K562 (cell line): ENCODE measurements at regions of chr9 and their contacts with region 1.

Region 1: GRCh38 chr9:116365056-116365471 is 211.5 kb downstream of the PAPPA start:
- DNase-seq: no peak
- ATAC-seq: no peak
- H3K4me3 ChIP-seq: no peak overlapping the region
- H3K27ac ChIP-seq: no peak overlapping the region
- H3K4me1 ChIP-seq: peaks cover 0 to 16% of the 10 kb centered on the region in 2 experiments; a peak in 3 of 5 replicates
- H3K27me3 ChIP-seq: no peaks in the 10 kb centered on the region
- CTCF ChIP-seq: no peak
- EP300 ChIP-seq: no peak
- POLR2A ChIP-seq: no peak
- RAD21 ChIP-seq: no peak

Region 2: GRCh38 chr9:116163293-116164055 is 201.6 kb before region 1 on chr9:
- CTCF ChIA-PET with region 1: no interaction called
- POLR2A ChIA-PET with region 1: no interaction called
- in situ Hi-C with region 1: no loop called
- intact Hi-C with region 1: loop called (anchors 10 kb)
- DNase-seq: peak; percentile 19 to 21 (median 20)
- ATAC-seq: peak; percentile 62; the same call in 1 of the 3 replicates
- H3K4me3 ChIP-seq: no peak overlapping the region
- H3K27ac ChIP-seq: no peak overlapping the region
- H3K4me1 ChIP-seq: no peaks in the 10 kb centered on the region
- H3K27me3 ChIP-seq: peaks cover 0 to 13% of the 10 kb centered on the region in 2 experiments; a peak in 1 of 5 replicates
- CTCF ChIP-seq: peak; percentile 34 to 49 (median 42); a peak in 4 of 6 replicates
- EP300 ChIP-seq: no peak
- POLR2A ChIP-seq: no peak
- RAD21 ChIP-seq: peak; percentile 41 to 61; a peak in 3 of 4 replicates

Region 3: GRCh38 chr9:116697362-116697761 is 332.3 kb after region 1 on chr9:
- CTCF ChIA-PET with region 1: no interaction called
- POLR2A ChIA-PET with region 1: no interaction called
- in situ Hi-C with region 1: no loop called
- intact Hi-C with region 1: no loop called
- DNase-seq: no peak
- ATAC-seq: no peak
- H3K4me3 ChIP-seq: no peak overlapping the region
- H3K27ac ChIP-seq: no peak overlapping the region
- H3K4me1 ChIP-seq: no peaks in the 10 kb centered on the region
- H3K27me3 ChIP-seq: no peaks in the 10 kb centered on the region
- CTCF ChIP-seq: no peak
- EP300 ChIP-seq: no peak
- POLR2A ChIP-seq: no peak
- RAD21 ChIP-seq: no peak